ENCODE measurements at regions of chr17 and their contacts with region 1.

Region 1: GRCh38 chr17:76737082-76737675 is at the start of gene SRSF2:
- DNase-seq: peak; percentile 100
- H3K4me3 Mint-ChIP-seq: peak within 1 kb of the TSS; percentile 92
- H3K27ac Mint-ChIP-seq: peak within 1 kb of the TSS; percentile 100
- H3K4me1 Mint-ChIP-seq: peaks cover 37% of the 10 kb centered on the region
- H3K27me3 Mint-ChIP-seq: no peaks in the 10 kb centered on the region
- total RNA-seq, gene SRSF2: 515 and 539 TPM in 2 replicates

Region 2: GRCh38 chr17:76072148-76072858 is 664.9 kb before region 1 on chr17 and contains the start of gene SRP68:
- intact Hi-C with region 1: loop called (anchors 10 kb)
- DNase-seq: peak; percentile 96
- H3K4me3 Mint-ChIP-seq: peak within 1 kb of the TSS; percentile 99
- H3K27ac Mint-ChIP-seq: peak within 1 kb of the TSS; percentile 100
- H3K4me1 Mint-ChIP-seq: peaks cover 36% of the 10 kb centered on the region
- H3K27me3 Mint-ChIP-seq: peaks cover 29% of the 10 kb centered on the region
- total RNA-seq, gene SRP68: 169 and 170 TPM in 2 replicates

Region 3: GRCh38 chr17:76557368-76558197 is 179.6 kb before region 1 on chr17:
- intact Hi-C with region 1: loop called (anchors 5 kb)
- DNase-seq: peak; percentile 99
- H3K4me3 Mint-ChIP-seq: peak overlapping the region; percentile 98
- H3K27ac Mint-ChIP-seq: peak overlapping the region; percentile 97
- H3K4me1 Mint-ChIP-seq: peaks cover 46% of the 10 kb centered on the region
- H3K27me3 Mint-ChIP-seq: no peaks in the 10 kb centered on the region

Region 4: GRCh38 chr17:76631829-76632565 is 105.2 kb before region 1 on chr17:
- intact Hi-C with region 1: no loop called
- DNase-seq: no peak
- H3K4me3 Mint-ChIP-seq: no peak overlapping the region
- H3K27ac Mint-ChIP-seq: no peak overlapping the region
- H3K4me1 Mint-ChIP-seq: no peaks in the 10 kb centered on the region
- H3K27me3 Mint-ChIP-seq: peaks cover 3% of the 10 kb centered on the region

Region 5: GRCh38 chr17:76726231-76726775 is 10.9 kb before region 1 on chr17 and contains the start of gene JMJD6:
- intact Hi-C with region 1: loop called (anchors 1 kb)
- DNase-seq: peak; percentile 98
- H3K4me3 Mint-ChIP-seq: peak within 1 kb of the TSS; percentile 96
- H3K27ac Mint-ChIP-seq: peak within 1 kb of the TSS; percentile 97
- H3K4me1 Mint-ChIP-seq: peaks cover 39% of the 10 kb centered on the region
- H3K27me3 Mint-ChIP-seq: no peaks in the 10 kb centered on the region
- total RNA-seq, gene JMJD6: 82.5 and 86.3 TPM in 2 replicates

Region 6: DNA sequence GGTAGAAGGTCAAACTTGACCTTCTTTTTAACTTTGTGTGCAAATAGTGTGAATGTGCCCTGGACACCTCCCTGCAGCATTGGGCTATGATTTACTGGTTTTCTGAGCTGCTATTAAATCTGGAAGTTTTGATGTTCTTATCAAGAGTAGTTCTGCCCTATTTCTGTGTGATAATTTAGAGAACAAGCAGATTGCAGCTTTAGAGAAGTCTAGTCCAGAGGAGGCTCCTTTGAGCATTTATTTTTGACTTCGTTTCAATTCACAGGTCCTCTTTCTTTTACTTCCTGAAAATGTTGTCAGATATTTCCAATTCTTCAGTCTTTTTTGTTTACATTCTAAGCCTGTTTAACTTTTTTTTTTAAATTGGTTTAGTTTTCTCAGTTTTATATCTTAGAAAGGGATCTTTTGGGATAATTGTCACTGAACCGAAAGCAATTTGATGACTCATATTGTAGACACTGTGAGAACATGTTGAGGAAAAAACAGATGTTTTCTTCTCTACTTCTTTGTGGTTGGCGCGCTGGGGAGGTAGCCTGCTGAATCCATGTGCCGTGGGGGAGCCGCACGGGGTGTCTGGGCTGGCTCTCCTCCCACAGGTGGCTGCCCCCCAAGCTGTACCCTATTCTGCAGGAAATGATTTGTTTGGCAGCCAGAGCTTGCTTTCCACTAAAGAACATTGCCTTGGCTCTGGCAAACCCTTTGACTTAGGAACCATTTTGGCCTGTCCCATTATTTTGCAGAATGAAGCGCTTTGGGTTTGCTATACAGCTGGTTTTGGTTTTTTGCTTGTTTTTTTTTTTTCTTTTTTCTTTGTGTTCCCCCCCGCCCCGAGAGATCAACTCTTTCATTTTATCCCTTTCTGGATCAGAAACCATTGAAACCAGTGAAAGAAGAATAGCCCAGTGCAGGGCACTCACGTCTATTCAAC is 54.1 kb after region 1 on chr17:
- intact Hi-C with region 1: loop called (anchors 5 kb)
- DNase-seq: peak; percentile 86
- H3K4me3 Mint-ChIP-seq: peak overlapping the region; percentile 58
- H3K27ac Mint-ChIP-seq: peak overlapping the region; percentile 52
- H3K4me1 Mint-ChIP-seq: peaks cover 27% of the 10 kb centered on the region
- H3K27me3 Mint-ChIP-seq: peaks cover 2% of the 10 kb centered on the region

Region 7: DNA sequence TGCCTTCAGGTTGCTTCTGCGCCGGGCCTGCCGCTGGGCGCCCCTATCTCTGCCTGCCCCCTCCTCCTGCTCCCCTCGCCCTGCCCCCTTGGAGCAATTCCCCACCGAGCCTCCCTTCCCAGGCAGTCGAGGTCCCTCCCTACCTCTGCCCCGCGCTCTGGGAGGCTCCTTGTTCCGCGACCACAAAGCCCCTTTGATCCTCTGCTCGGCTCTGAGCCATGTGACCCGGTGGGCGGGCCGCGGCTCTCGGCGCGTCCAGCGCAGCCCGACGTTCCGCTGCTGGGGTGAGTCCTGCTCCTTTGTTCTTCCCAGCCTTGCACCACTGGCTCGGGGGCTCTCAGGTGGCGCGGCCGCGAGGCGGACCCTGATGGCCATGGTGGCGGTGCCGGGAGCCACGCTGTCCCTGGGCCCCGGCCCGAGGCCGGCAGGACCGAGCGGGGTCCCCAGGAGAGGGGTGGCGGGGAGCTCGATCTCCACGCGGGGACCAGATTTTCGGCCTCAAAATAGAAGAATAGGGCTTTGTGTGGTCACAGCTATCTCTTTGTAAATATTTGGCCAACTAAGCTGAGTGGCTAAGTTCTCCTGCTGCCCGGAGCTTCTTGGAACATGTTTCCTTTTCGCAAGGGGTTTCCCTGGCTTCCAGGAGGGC is 714.2 kb after region 1 on chr17:
- intact Hi-C with region 1: loop called (anchors 5 kb)
- DNase-seq: peak; percentile 94
- H3K4me3 Mint-ChIP-seq: peak overlapping the region; percentile 97
- H3K27ac Mint-ChIP-seq: peak overlapping the region; percentile 96
- H3K4me1 Mint-ChIP-seq: peaks cover 62% of the 10 kb centered on the region
- H3K27me3 Mint-ChIP-seq: no peaks in the 10 kb centered on the region

Measured in activated CD4-positive, alpha-beta T cell treated with anti-CD3 and anti-CD28 coated beads, Interleukin-2, amount 10 ng/mL, durations not matched to agents 24 days and 14 days (primary cell).